ENCODE measurements at regions of chr2 and their contacts with region 1.

Region 1: GRCh38 chr2:134118279-134119116 is 135.4 kb upstream of the MGAT5 start:
- DNase-seq: peak; percentile 76 to 78
- ATAC-seq: peak; percentile 72 to 75
- H3K4me3 ChIP-seq: peak overlapping the region in 2 of 4 donors; percentile 9 to 27
- H3K27ac ChIP-seq: peak overlapping the region; percentile 47 to 79 (median 54)
- H3K4me1 ChIP-seq: peaks cover 8 to 15% of the 10 kb centered on the region in 2 donors
- H3K27me3 ChIP-seq: no peaks in the 10 kb centered on the region
- CTCF ChIP-seq: peak; percentile 62 to 82 (median 71)
- POLR2A ChIP-seq: no peak

Region 2: GRCh38 chr2:133993160-133993559 is 125.3 kb before region 1 on chr2:
- in situ Hi-C with region 1: no loop called
- intact Hi-C with region 1: no loop called
- DNase-seq: peak in 1 of 2 donors; percentile 21
- ATAC-seq: peak; percentile 30 to 60
- H3K4me3 ChIP-seq: no peak overlapping the region
- H3K27ac ChIP-seq: no peak overlapping the region
- H3K4me1 ChIP-seq: peaks cover 0 to 7% of the 10 kb centered on the region in 2 donors
- H3K27me3 ChIP-seq: no peaks in the 10 kb centered on the region
- CTCF ChIP-seq: no peak
- POLR2A ChIP-seq: no peak

Region 3: DNA sequence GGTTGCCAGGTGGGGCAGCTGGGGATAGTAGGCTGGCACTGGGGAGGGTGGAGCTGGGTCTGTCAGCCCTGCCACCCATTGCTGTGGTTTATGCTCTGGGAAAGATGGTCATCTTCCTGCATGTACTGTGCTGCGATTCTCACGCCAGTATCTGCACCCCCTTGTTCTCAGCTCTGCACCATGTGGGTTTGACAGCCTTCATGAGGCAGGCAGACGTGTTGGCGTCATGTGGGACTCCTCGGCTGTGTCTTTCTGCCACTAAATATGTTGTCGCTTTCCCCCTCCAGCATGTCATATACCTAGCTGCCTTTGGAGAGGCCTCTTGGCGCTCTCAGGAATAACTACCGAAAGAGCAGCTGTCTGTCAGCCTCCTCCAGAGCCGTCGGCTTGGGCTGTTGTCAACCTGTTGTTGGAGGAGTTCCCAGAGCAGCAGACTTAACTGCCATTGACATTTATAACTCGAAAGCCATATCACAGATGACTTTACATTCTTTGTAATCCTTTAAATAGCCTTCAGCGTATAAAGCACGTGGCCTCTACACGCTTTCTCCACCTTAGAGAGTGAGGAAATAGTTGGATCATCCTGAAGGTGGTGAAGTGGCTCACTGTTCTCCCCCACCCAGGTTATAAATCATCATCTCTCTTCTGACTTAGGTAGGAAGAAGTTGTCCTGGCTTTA is 55.0 kb after region 1 on chr2:
- in situ Hi-C with region 1: no loop called
- intact Hi-C with region 1: loop called (anchors 5 kb)
- DNase-seq: peak; percentile 65 to 68
- ATAC-seq: peak; percentile 90 to 91
- H3K4me3 ChIP-seq: no peak overlapping the region
- H3K27ac ChIP-seq: peak overlapping the region; percentile 32 to 80 (median 62)
- H3K4me1 ChIP-seq: peaks cover 24 to 31% of the 10 kb centered on the region in 2 donors
- H3K27me3 ChIP-seq: no peaks in the 10 kb centered on the region
- CTCF ChIP-seq: no peak
- POLR2A ChIP-seq: no peak

Region 4: DNA sequence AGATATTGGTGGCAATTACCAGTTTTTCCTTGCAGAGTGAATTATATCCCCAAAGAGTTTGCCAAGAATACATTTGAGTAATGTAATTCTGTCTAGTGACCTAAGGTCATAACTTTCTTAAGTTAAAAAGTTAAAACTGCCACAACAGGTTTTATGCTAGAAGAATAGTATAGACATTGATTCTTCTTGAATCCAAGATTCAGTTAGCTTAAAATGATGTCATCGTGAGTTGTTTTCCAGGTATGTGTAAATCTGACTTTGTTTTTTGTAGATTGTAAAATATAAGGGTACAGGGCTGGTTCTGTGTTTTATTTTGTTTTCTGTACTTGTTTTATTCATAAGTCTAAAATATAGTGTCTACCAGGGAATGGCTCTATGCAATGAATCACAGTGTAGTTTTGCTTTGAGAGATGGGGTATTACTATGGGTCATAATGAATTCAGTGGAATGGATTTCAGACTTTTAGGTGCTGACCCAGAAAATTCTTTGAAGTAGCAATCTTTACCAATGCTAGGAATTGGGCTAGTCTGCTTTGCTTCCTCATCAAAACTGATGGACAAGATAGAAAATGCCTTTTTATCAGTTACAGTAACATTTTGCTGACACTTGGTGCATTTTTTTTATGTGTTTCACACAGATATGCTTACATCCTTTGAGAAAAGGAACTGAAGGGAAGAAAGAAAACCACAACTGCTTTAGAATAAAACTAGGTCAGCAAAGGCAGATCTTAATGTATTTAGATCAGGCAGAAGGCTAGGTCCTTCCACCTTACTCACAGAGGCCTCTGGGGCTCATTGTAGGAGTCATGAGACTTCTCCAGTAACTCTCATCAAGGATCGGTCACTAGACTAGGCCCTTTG is 114.6 kb after region 1 on chr2:
- in situ Hi-C with region 1: loop called in 1 of 4 experiments (anchors 10 kb)
- intact Hi-C with region 1: no loop called
- DNase-seq: no peak
- ATAC-seq: no peak
- H3K4me3 ChIP-seq: no peak overlapping the region
- H3K27ac ChIP-seq: no peak overlapping the region
- H3K4me1 ChIP-seq: no peaks in the 10 kb centered on the region
- H3K27me3 ChIP-seq: no peaks in the 10 kb centered on the region
- CTCF ChIP-seq: no peak
- POLR2A ChIP-seq: no peak

Region 5: DNA sequence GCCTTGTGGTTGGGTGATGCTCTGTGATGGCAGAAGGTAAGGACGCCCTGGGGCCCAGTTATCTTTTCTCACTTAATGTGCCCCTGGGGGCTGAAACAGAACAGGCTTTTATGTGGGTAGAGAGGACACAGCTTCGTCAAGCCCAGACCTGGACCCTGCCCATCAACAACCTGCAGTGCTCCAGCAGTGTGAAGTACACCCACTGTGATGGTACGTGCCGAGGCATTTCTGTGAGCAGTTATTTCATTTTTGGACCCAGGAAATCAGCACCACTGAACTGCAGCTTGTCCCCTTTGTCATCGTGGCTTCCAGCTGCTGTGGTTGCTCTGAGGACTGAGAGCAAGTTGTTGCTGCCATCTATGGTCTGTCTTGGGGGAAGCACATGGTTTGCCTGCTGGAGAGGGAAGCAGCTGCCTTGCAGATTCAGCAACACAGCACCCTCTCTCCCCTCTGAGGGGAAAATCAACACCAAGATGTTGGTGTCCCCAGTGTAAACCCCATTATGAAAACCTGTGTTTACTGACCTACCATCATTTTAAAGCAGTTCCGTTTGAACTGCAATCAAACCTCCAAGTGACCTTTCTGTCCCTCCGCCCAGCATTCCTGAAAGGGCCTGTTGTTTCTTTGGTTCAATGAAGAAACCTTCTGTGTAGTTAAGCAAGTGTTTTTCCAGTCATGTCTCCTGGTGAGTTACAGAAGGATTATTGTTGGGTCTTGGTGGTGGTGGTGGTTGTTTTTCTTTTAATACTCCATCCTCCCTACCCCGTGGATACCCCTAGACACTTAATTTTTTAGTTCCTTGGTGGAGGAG is 293.5 kb after region 1 on chr2:
- in situ Hi-C with region 1: loop called (anchors 5 to 10 kb)
- intact Hi-C with region 1: loop called (anchors 1 kb)
- DNase-seq: peak; percentile 36 to 40
- ATAC-seq: peak; percentile 89 to 92
- H3K4me3 ChIP-seq: no peak overlapping the region
- H3K27ac ChIP-seq: no peak overlapping the region
- H3K4me1 ChIP-seq: peaks cover 6 to 9% of the 10 kb centered on the region in 2 donors
- H3K27me3 ChIP-seq: no peaks in the 10 kb centered on the region
- CTCF ChIP-seq: peak in 4 of 5 experiments; percentile 28 to 70 (median 56)
- POLR2A ChIP-seq: no peak